HAP-1 (cell line): ENCODE measurements at regions of chr6 and their contacts with region 1.

Region 1: GRCh38 chr6:33585403-33586107 is 5.5 kb upstream of the BAK1 start:
- DNase-seq: peak; percentile 50 to 89
- H3K4me3 ChIP-seq: no peak overlapping the region
- H3K4me1 ChIP-seq: peaks cover 4% of the 10 kb centered on the region
- H3K27me3 ChIP-seq: no peaks in the 10 kb centered on the region

Region 2: GRCh38 chr6:33700391-33701050 is 115.0 kb after region 1 on chr6:
- in situ Hi-C with region 1: loop called (anchors 5 kb)
- DNase-seq: peak; percentile 42 to 84
- H3K4me3 ChIP-seq: no peak overlapping the region
- H3K4me1 ChIP-seq: no peaks in the 10 kb centered on the region
- H3K27me3 ChIP-seq: no peaks in the 10 kb centered on the region

Region 3: GRCh38 chr6:33744001-33744848 is 158.7 kb after region 1 on chr6:
- in situ Hi-C with region 1: no loop called
- DNase-seq: peak; percentile 82 to 89
- H3K4me3 ChIP-seq: no peak overlapping the region
- H3K4me1 ChIP-seq: no peaks in the 10 kb centered on the region
- H3K27me3 ChIP-seq: no peaks in the 10 kb centered on the region; the same call in 1 of the 2 replicates